ENCODE measurements at regions of chr7 and their contacts with region 1.

Region 1: GRCh38 chr7:64951250-64951848 is 39.5 kb downstream of the ZNF117 start:
- DNase-seq: peak; percentile 52
- ATAC-seq: 0 out of 3 replicates have a peak, but pooled peaks have one; percentile 9
- H3K4me3 ChIP-seq: no peak overlapping the region
- H3K27ac ChIP-seq: no peak overlapping the region
- H3K4me1 ChIP-seq: peaks cover 26% of the 10 kb centered on the region
- H3K27me3 ChIP-seq: peaks cover 0 to 2% of the 10 kb centered on the region in 2 experiments; a peak in 1 of 5 replicates
- CTCF ChIP-seq: peak; percentile 83
- EP300 ChIP-seq: no peak
- POLR2A ChIP-seq: no peak
- RAD21 ChIP-seq: peak; percentile 82

Region 2: GRCh38 chr7:65216459-65216858 is 265.1 kb after region 1 on chr7:
- CTCF ChIA-PET with region 1: interaction called, 5 read pairs
- POLR2A ChIA-PET with region 1: no interaction called
- in situ Hi-C with region 1: no loop called
- intact Hi-C with region 1: loop called (anchors 5 kb)
- DNase-seq: peak; percentile 52
- ATAC-seq: peak; percentile 83
- H3K4me3 ChIP-seq: no peak overlapping the region
- H3K27ac ChIP-seq: no peak overlapping the region
- H3K4me1 ChIP-seq: peaks cover 10% of the 10 kb centered on the region; the same call in 1 of the 2 replicates
- H3K27me3 ChIP-seq: no peaks in the 10 kb centered on the region
- CTCF ChIP-seq: peak; percentile 82
- EP300 ChIP-seq: no peak
- POLR2A ChIP-seq: no peak
- RAD21 ChIP-seq: peak; percentile 37; the same call in 1 of the 2 replicates

Region 3: DNA sequence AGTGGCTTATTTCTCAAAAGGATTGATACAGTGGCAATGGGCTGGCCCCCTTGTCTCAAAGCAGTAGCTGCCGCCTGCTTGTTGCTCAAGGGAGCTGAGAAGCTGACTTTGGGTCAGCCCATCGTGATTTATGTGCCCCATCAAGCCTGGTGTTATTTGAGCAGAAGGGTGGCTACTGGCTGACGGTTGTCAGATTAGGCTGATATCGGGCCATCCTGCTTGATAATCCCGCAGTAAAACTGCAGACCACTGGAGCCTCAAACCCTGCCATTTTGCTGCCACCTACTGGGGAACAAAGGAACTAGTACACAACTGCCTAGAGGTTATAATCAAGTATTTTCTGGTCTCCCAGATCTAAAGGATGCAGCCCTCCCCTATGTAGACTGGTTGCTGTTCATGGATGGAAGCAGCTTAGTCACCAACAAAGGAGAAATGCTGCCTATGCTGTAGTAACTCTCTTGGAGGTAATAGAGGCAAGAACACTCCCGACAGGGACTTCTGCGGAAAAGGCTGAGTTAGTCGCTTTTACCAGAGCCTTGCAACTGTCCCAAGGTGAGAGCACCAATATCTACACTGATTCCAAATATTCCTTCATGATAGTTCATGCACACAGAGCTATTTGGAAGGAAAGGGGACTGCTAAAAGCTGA is 356.4 kb after region 1 on chr7:
- CTCF ChIA-PET with region 1: no interaction called
- POLR2A ChIA-PET with region 1: no interaction called
- in situ Hi-C with region 1: no loop called
- intact Hi-C with region 1: loop called (anchors 1 kb)
- DNase-seq: peak; percentile 57
- ATAC-seq: peak; percentile 92
- H3K4me3 ChIP-seq: no peak overlapping the region
- H3K27ac ChIP-seq: no peak overlapping the region
- H3K4me1 ChIP-seq: no peaks in the 10 kb centered on the region
- H3K27me3 ChIP-seq: no peaks in the 10 kb centered on the region
- CTCF ChIP-seq: peak; percentile 91
- EP300 ChIP-seq: no peak
- POLR2A ChIP-seq: no peak
- RAD21 ChIP-seq: peak; percentile 85

Region 4: GRCh38 chr7:65475734-65476319 is 524.5 kb after region 1 on chr7:
- CTCF ChIA-PET with region 1: no interaction called
- POLR2A ChIA-PET with region 1: no interaction called
- in situ Hi-C with region 1: no loop called
- intact Hi-C with region 1: loop called (anchors 5 kb)
- DNase-seq: peak; percentile 93
- ATAC-seq: peak; percentile 91
- H3K4me3 ChIP-seq: peak overlapping the region in 1 of 3 experiments; percentile 17; a peak in 1 of 6 replicates
- H3K27ac ChIP-seq: peak overlapping the region; percentile 69
- H3K4me1 ChIP-seq: peaks cover 54% of the 10 kb centered on the region
- H3K27me3 ChIP-seq: no peaks in the 10 kb centered on the region
- CTCF ChIP-seq: no peak
- EP300 ChIP-seq: peak; percentile 24 to 96; a peak in 3 of 4 replicates
- POLR2A ChIP-seq: no peak
- RAD21 ChIP-seq: no peak